ENCODE measurements at regions of chr17 and their contacts with region 1.

Region 1: GRCh38 chr17:49414622-49415350 is at the start of gene PHB1:
- DNase-seq: peak; percentile 97
- H3K4me3 ChIP-seq: peak within 1 kb of the TSS; percentile 86 to 87
- H3K27ac ChIP-seq: peak within 1 kb of the TSS in 1 of 2 experiments; percentile 48; a peak in 1 of 4 replicates
- H3K4me1 ChIP-seq: peaks cover 0 to 11% of the 10 kb centered on the region in 2 experiments; a peak in 2 of 4 replicates
- H3K27me3 ChIP-seq: no peaks in the 10 kb centered on the region
- CTCF ChIP-seq: no peak
- EP300 ChIP-seq: no peak
- RAD21 ChIP-seq: no peak
- polyA plus RNA-seq, gene PHB1: 379 and 477 TPM in 2 replicates

Region 2: GRCh38 chr17:49399995-49400394 is 14.8 kb before region 1 on chr17:
- CTCF ChIA-PET with region 1: interaction called, 78 read pairs
- POLR2A ChIA-PET with region 1: no interaction called
- DNase-seq: no peak
- H3K4me3 ChIP-seq: no peak overlapping the region
- H3K27ac ChIP-seq: no peak overlapping the region
- H3K4me1 ChIP-seq: no peaks in the 10 kb centered on the region
- H3K27me3 ChIP-seq: no peaks in the 10 kb centered on the region
- CTCF ChIP-seq: no peak
- EP300 ChIP-seq: no peak
- RAD21 ChIP-seq: no peak